Head of caudate nucleus (tissue), 42 donors: ENCODE measurements at regions of chr18 and their contacts with region 1.

Region 1: GRCh38 chr18:26405190-26405801 is 143.1 kb downstream of the KCTD1 start:
- DNase-seq: peak in 41 of 42 donors; percentile 36 to 83 (median 61)

Region 2: DNA sequence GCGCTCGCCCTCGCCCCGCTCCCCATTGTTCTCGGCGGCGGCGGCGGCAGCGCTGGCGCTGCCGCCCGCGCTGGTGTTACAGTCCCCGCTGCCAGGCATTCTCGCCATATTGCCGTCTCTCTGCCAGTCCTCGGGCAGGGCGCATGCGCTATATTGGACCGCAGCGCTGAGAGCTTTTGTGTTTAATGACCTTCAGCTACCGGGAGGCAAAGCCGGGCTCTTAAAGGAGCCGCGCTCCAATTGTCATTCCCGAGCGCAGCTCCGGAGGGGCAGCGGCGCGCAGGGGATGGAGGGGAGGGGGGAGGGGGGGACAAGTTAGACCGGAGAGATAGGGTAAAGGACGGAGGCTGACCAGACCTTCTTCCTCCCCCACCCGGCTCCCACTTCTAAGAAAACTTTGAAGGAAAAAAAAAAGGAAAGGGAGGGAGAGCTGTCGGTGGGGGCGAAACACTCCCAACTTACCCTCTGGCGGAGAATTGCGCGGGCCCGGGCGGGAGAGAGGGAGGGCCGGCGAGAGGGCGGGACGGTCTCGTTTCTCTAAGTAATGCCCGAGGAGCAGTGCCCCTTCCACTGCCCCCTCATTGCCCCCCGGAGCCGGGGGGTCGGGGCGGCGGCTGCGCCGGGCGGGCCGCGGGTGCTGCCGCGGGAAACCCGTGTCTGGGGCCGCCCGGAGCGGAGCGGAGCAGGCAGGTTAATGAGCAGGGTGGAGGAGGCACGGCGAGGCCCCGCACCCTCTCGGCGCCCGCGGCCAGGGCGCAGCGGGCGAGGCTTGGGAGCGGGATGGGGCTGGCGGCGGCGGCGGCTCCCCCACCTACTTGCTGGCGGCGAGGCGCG is 143.3 kb after region 1 on chr18 and contains the start of gene KCTD1:
- intact Hi-C with region 1: loop called (anchors 10 kb)
- DNase-seq: peak; percentile 55 to 92 (median 80)

Region 3: DNA sequence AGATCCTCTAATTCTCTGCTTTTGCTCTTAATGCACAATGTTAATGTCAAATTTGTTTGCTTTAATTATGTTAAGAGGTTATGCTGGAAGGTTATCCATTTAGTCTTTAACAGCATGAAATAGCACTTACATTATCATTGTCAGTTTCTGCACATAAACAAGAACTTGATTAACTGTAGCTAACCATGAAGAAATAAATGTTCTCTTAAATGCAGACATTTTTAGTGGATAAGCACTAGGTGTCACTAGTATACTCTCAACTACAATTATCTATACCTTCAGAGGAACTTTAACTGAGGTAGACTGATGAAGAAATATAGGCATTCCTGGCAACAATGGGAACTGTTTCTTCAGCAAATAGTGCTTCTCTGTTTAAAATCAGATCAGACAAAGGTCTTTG is 958.6 kb after region 1 on chr18:
- intact Hi-C with region 1: no loop called
- DNase-seq: no peak